ENCODE measurements at regions of chr17 and their contacts with region 1.

Region 1: DNA sequence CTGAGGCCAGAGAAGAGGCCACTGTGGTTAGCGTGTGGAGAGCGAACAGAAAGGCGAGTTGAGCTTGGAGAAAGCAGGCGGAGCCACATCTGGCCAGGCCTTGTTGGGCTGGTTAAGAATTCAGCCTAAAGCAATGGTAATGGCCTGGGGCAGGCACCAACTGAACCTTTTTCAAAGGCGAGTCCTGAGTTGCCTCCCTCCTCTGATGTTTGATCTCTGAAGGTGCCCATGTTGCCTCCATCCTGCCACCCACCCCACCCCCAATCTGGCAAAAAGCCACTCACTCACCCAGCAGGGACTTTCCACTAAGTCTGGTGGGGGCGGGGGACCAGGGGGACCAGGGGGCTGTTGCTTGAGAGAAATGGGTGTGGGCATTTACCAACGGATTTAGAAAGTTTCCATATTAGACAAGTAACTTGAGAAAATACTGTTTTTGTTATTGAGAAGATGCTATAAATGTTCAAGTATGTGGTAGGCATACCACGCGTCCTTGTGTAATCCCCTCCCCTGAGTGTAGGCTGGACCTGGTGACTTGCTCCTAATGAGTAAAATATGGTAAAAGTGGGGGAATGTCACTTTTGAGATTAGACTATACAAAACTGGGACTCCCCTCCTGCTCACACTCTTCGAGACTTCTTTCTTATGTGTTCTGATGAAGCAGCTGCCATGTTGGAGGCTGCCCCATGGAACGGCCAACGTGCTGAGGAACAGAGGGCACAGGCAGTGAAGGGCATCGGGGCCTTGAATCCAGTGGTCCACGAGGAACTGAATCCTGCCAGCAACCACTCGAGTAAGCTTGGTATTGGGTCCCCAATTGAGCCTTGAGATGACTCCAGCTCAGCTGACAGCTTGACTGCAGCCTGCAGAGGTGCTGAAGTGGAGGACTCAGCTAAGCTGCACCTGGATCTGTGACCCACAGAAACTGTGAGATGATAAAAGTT is 29.9 kb upstream of the TNS4 start:
- DNase-seq: peak in 6 of 9 donors; percentile 39 to 84 (median 66)
- ATAC-seq: peak; percentile 14
- H3K4me3 ChIP-seq: peak overlapping the region; percentile 15
- H3K4me3 Mint-ChIP-seq: peak overlapping the region in 8 of 10 donors; percentile 0 to 78 (median 48)
- H3K27ac ChIP-seq: no peak overlapping the region
- H3K27ac Mint-ChIP-seq: peak overlapping the region; percentile 72 to 99 (median 92)
- H3K4me1 ChIP-seq: peaks cover 63 to 67% of the 10 kb centered on the region in 2 donors
- H3K4me1 Mint-ChIP-seq: peaks cover 47 to 90% (median 70%) of the 10 kb centered on the region in 7 donors
- H3K27me3 ChIP-seq: no peaks in the 10 kb centered on the region
- H3K27me3 Mint-ChIP-seq: peaks cover 0 to 3% (median 0%) of the 10 kb centered on the region in 5 donors

Region 2: DNA sequence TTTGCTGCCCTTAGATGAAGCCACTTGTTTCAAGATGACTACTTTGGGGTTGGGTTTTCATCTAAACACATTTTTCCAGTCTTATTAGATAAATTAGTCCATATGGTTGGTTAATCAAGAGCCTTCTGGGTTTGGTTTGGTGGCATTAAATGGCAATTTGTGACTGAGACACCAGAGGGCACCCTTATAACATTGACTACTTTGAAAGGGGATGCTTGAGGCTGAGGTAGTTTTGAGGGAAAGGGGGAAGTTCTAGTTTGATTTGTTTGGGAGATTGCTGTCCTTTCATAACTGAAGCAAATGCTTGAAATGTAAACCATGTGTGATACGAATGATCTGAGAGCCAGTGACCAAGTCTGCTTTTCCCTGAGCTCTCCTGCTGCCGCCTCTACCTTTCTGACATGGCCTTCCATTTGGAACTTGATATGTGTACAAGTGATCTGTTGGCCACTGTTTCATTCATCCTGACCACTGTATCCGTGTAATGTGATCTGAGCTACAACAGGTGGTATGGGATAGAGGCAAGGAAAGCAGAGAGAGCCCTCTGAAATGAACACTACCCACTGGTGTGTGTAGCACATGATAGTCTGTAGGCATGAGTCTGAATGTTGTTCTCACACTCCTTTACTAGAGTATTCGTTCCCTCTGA is 228.2 kb before region 1 on chr17:
- CTCF ChIA-PET with region 1: interaction called, 18 read pairs
- POLR2A ChIA-PET with region 1: interaction called, 5 read pairs
- intact Hi-C with region 1: loop called (anchors 1 kb)
- DNase-seq: peak in 7 of 9 donors; percentile 43 to 70 (median 64)
- ATAC-seq: peak; percentile 86
- H3K4me3 ChIP-seq: no peak overlapping the region
- H3K4me3 Mint-ChIP-seq: peak overlapping the region in 2 of 10 donors; percentile 8 to 44
- H3K27ac ChIP-seq: no peak overlapping the region
- H3K27ac Mint-ChIP-seq: peak overlapping the region in 7 of 9 donors; percentile 3 to 34 (median 19)
- H3K4me1 ChIP-seq: peaks cover 13 to 28% of the 10 kb centered on the region in 2 donors
- H3K4me1 Mint-ChIP-seq: peaks cover 11 to 21% (median 15%) of the 10 kb centered on the region in 7 donors
- H3K27me3 ChIP-seq: no peaks in the 10 kb centered on the region
- H3K27me3 Mint-ChIP-seq: no peaks in the 10 kb centered on the region

Region 3: GRCh38 chr17:40399185-40399584 is 132.1 kb before region 1 on chr17:
- CTCF ChIA-PET with region 1: interaction called, 50 read pairs
- POLR2A ChIA-PET with region 1: interaction called, 30 read pairs
- intact Hi-C with region 1: loop called (anchors 1 kb)
- DNase-seq: peak in 6 of 9 donors; percentile 39 to 69 (median 60)
- ATAC-seq: peak; percentile 75
- H3K4me3 ChIP-seq: no peak overlapping the region
- H3K4me3 Mint-ChIP-seq: no peak overlapping the region
- H3K27ac ChIP-seq: no peak overlapping the region
- H3K27ac Mint-ChIP-seq: peak overlapping the region in 3 of 9 donors; percentile 6 to 65 (median 64)
- H3K4me1 ChIP-seq: no peaks in the 10 kb centered on the region
- H3K4me1 Mint-ChIP-seq: peaks cover 8 to 36% (median 22%) of the 10 kb centered on the region in 7 donors
- H3K27me3 ChIP-seq: no peaks in the 10 kb centered on the region
- H3K27me3 Mint-ChIP-seq: no peaks in the 10 kb centered on the region

Region 4: GRCh38 chr17:40450175-40450574 is 81.1 kb before region 1 on chr17:
- CTCF ChIA-PET with region 1: interaction called, 25 read pairs
- POLR2A ChIA-PET with region 1: interaction called, 3 read pairs
- intact Hi-C with region 1: loop called in 1 of 2 experiments (anchors 1 kb)
- DNase-seq: peak in 2 of 9 donors; percentile 19 to 39
- ATAC-seq: no peak
- H3K4me3 ChIP-seq: no peak overlapping the region
- H3K4me3 Mint-ChIP-seq: no peak overlapping the region
- H3K27ac ChIP-seq: no peak overlapping the region
- H3K27ac Mint-ChIP-seq: no peak overlapping the region
- H3K4me1 ChIP-seq: peaks cover 15 to 18% of the 10 kb centered on the region in 2 donors
- H3K4me1 Mint-ChIP-seq: peaks cover 18 to 43% (median 21%) of the 10 kb centered on the region in 7 donors
- H3K27me3 ChIP-seq: no peaks in the 10 kb centered on the region
- H3K27me3 Mint-ChIP-seq: peaks cover 0 to 5% (median 0%) of the 10 kb centered on the region in 5 donors

Region 5: DNA sequence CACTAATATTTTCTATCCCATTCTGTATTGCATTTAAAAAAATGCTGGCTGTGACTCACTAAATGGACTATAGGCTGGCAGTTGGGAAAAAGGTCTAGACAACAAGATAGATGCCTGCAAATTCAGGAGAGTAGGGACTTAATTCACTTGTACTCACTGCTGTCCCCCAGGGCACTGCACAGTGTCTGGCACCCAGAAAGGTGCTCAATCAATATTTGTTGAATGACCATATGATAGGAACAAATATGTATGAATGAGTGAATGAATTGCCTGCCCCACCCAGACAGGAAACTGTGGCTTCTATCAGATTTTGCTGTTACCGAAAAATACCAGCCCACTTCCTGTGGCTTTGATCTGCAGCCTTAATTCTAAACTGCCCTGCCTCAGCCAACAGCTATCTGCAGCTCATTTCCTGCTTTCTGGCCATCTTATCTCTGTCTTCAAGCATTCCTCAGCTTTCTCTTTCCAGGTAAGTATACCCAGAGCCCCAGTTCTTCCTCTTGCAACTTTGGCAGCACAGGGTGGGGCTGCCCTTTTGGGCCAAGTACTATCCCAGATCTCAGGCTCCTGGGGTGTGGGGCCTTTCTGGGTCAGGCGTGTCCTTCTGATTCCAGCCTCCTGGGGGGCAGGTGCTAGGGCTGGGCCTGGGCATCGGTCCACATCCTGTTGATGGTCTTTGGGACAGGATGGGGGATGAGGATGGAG is 14.6 kb before region 1 on chr17:
- CTCF ChIA-PET with region 1: interaction called, 25 read pairs
- POLR2A ChIA-PET with region 1: interaction called, 11 read pairs
- intact Hi-C with region 1: loop called (anchors 1 kb)
- DNase-seq: peak in 8 of 9 donors; percentile 69 to 88 (median 82)
- ATAC-seq: peak; percentile 85
- H3K4me3 ChIP-seq: peak overlapping the region; percentile 53
- H3K4me3 Mint-ChIP-seq: peak overlapping the region; percentile 60 to 89 (median 84)
- H3K27ac ChIP-seq: peak overlapping the region; percentile 10
- H3K27ac Mint-ChIP-seq: peak overlapping the region; percentile 21 to 97 (median 91)
- H3K4me1 ChIP-seq: peaks cover 47 to 55% of the 10 kb centered on the region in 2 donors
- H3K4me1 Mint-ChIP-seq: peaks cover 35 to 72% (median 67%) of the 10 kb centered on the region in 7 donors
- H3K27me3 ChIP-seq: no peaks in the 10 kb centered on the region
- H3K27me3 Mint-ChIP-seq: peaks cover 0 to 12% (median 0%) of the 10 kb centered on the region in 5 donors

Region 6: GRCh38 chr17:40559954-40560591 is 28.8 kb after region 1 on chr17:
- CTCF ChIA-PET with region 1: interaction called, 88 read pairs
- POLR2A ChIA-PET with region 1: interaction called, 1,524 read pairs
- intact Hi-C with region 1: loop called (anchors 1 kb)
- DNase-seq: peak; percentile 74 to 88 (median 82)
- ATAC-seq: peak; percentile 60
- H3K4me3 ChIP-seq: peak overlapping the region; percentile 90
- H3K4me3 Mint-ChIP-seq: peak overlapping the region; percentile 90 to 100 (median 98)
- H3K27ac ChIP-seq: peak overlapping the region; percentile 99
- H3K27ac Mint-ChIP-seq: peak overlapping the region; percentile 92 to 100 (median 100)
- H3K4me1 ChIP-seq: peaks cover 50 to 52% of the 10 kb centered on the region in 2 donors
- H3K4me1 Mint-ChIP-seq: peaks cover 39 to 88% (median 58%) of the 10 kb centered on the region in 7 donors
- H3K27me3 ChIP-seq: no peaks in the 10 kb centered on the region
- H3K27me3 Mint-ChIP-seq: peaks cover 0 to under 1% (median 0%) of the 10 kb centered on the region in 5 donors

Region 7: GRCh38 chr17:40596261-40596919 is 65.1 kb after region 1 on chr17:
- CTCF ChIA-PET with region 1: no interaction called
- POLR2A ChIA-PET with region 1: no interaction called
- intact Hi-C with region 1: no loop called
- DNase-seq: peak in 3 of 9 donors; percentile 43 to 60 (median 56)
- ATAC-seq: peak; percentile 12
- H3K4me3 ChIP-seq: peak overlapping the region; percentile 17
- H3K4me3 Mint-ChIP-seq: peak overlapping the region; percentile 53 to 78 (median 72)
- H3K27ac ChIP-seq: peak overlapping the region; percentile 94
- H3K27ac Mint-ChIP-seq: peak overlapping the region; percentile 90 to 100 (median 99)
- H3K4me1 ChIP-seq: peaks cover 37 to 74% of the 10 kb centered on the region in 2 donors
- H3K4me1 Mint-ChIP-seq: peaks cover 48 to 94% (median 84%) of the 10 kb centered on the region in 7 donors
- H3K27me3 ChIP-seq: no peaks in the 10 kb centered on the region
- H3K27me3 Mint-ChIP-seq: no peaks in the 10 kb centered on the region